ENCODE measurements at regions of chr5 and their contacts with region 1.

Region 1: DNA sequence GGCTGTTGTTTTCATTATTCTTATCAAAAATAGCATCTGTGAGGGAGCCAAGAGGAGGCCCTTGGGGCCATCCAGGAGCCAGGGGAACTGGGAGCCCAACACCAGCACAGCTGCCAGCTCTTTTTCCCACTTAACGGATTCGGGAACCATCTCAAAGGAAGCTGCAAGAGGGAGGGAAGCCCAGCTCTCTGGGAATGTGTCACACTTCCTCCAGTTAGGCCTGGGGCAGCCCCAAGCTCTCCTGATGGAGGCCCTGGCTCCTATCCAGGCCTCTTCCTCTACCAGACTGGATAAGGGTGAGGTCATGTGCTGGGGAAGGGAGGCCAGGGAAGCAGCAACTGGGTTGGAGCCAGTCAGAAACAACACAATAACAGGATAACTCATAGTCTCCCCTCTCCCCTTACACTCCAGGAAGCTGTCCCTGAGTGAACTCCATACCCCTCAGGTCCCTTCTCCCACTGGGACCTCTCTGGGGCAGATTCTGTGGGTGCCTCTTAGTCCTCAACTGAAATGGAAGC is 12.7 kb downstream of the CSF2 start:
- DNase-seq: peak; percentile 82 to 88 (median 85)
- ATAC-seq: peak; percentile 68 to 97 (median 92)
- H3K4me3 ChIP-seq: no peak overlapping the region
- H3K27ac ChIP-seq: peak overlapping the region in 9 of 12 donors; percentile 11 to 78 (median 53)
- H3K4me1 ChIP-seq: peaks cover 0 to 29% (median 20%) of the 10 kb centered on the region in 12 donors
- H3K27me3 ChIP-seq: no peaks in the 10 kb centered on the region
- CTCF ChIP-seq: no peak
- POLR2A ChIP-seq: no peak

Region 2: DNA sequence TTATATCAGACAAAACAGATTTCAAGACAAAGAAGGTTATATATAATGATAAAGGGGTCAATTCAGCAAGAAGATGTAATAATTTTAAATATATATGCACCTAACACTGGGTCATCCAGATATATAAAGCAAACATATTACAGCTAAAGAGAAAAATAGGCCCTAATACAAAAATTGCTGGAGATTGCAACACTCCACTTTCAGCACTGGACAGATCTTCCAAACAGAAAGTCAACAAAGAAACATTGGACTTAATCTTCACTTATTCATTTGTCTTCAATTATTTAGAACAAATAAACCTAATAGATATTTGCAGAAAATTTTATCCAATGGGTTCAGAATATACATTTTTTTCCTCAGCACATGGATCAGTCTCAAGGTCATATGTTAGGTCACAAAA is 186.6 kb before region 1 on chr5:
- intact Hi-C with region 1: no loop called
- DNase-seq: no peak
- ATAC-seq: no peak
- H3K4me3 ChIP-seq: no peak overlapping the region
- H3K27ac ChIP-seq: no peak overlapping the region
- H3K4me1 ChIP-seq: no peaks in the 10 kb centered on the region
- H3K27me3 ChIP-seq: peaks cover 0 to 11% (median 0%) of the 10 kb centered on the region in 9 donors
- CTCF ChIP-seq: no peak
- POLR2A ChIP-seq: no peak

Region 3: GRCh38 chr5:132103332-132103951 is 17.1 kb after region 1 on chr5:
- intact Hi-C with region 1: loop called in 1 of 10 experiments (anchors 1 kb)
- DNase-seq: peak; percentile 78 to 90 (median 86)
- ATAC-seq: peak; percentile 70 to 95 (median 87)
- H3K4me3 ChIP-seq: no peak overlapping the region
- H3K27ac ChIP-seq: peak overlapping the region in 9 of 12 donors; percentile 22 to 74 (median 49)
- H3K4me1 ChIP-seq: peaks cover 0 to 52% (median 17%) of the 10 kb centered on the region in 12 donors
- H3K27me3 ChIP-seq: no peaks in the 10 kb centered on the region
- CTCF ChIP-seq: no peak
- POLR2A ChIP-seq: no peak

Region 4: DNA sequence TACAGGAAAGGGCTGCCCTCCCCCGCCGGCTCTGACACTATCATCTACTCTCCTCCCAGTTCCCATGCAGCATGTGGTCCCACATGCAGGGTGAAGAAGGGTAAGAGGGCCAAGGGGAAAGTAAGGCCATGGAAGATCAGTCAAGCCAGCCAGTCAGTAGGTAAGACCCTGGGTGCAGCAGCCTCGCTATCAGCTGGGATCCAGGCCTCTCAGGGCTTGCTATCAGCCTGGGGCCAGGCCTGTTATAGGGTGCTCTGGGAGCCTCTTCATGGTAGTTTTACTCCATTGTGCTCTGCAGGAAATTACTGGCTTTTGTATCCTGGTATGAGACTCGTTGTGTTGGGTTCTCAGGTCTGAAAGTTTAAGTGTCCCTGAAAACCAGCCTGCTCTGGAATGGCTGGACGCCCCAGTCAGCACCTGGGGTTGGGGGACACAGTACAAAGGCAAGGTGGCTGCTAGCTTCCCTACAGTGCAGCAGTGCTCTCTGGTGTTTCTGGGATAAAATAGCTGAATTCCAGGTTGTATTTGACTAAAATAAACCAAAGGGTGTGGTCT is 229.3 kb after region 1 on chr5:
- intact Hi-C with region 1: no loop called
- DNase-seq: no peak
- ATAC-seq: no peak
- H3K4me3 ChIP-seq: no peak overlapping the region
- H3K27ac ChIP-seq: no peak overlapping the region
- H3K4me1 ChIP-seq: peaks cover 0 to 21% (median 1%) of the 10 kb centered on the region in 12 donors
- H3K27me3 ChIP-seq: no peaks in the 10 kb centered on the region
- CTCF ChIP-seq: no peak
- POLR2A ChIP-seq: no peak